ENCODE measurements at regions of chr7 and their contacts with region 1.

Region 1: DNA sequence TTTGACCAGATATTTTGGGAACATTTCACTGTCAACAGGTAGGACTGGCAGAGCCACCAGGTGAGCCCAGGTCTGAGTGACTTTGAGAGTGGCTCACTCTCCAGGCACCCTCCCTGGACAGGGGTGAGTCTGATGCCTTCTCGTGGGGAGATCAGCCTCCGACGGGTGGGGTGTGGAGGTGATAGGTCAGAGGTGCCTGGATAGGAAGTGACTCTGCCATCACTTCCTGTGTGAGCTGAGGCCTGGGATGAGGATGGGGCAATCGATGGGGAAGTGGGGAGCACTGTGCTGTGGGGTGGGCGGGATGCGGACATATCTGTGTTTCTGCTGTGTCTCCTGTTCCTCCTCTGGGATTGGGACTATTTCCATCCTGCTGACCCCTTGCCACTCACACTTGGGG is 34.6 kb downstream of the IFT22 start:
- DNase-seq: no peak
- H3K4me3 ChIP-seq: no peak overlapping the region
- H3K4me1 ChIP-seq: no peaks in the 10 kb centered on the region
- H3K27me3 ChIP-seq: no peaks in the 10 kb centered on the region

Region 2: GRCh38 chr7:100673300-100673941 is 613.6 kb before region 1 on chr7 and contains the start of gene GNB2:
- in situ Hi-C with region 1: no loop called
- DNase-seq: peak; percentile 93 to 99
- H3K4me3 ChIP-seq: peak within 1 kb of the TSS; percentile 97
- H3K4me1 ChIP-seq: peaks cover 4% of the 10 kb centered on the region
- H3K27me3 ChIP-seq: peaks cover under 1% of the 10 kb centered on the region

Region 3: GRCh38 chr7:101153969-101154692 is 132.9 kb before region 1 on chr7 and contains the start of gene AP1S1:
- in situ Hi-C with region 1: loop called (anchors 5 kb)
- DNase-seq: peak; percentile 94 to 98
- H3K4me3 ChIP-seq: peak within 1 kb of the TSS; percentile 71
- H3K4me1 ChIP-seq: no peaks in the 10 kb centered on the region
- H3K27me3 ChIP-seq: no peaks in the 10 kb centered on the region